ENCODE measurements at regions of chr9 and their contacts with region 1.

Region 1: DNA sequence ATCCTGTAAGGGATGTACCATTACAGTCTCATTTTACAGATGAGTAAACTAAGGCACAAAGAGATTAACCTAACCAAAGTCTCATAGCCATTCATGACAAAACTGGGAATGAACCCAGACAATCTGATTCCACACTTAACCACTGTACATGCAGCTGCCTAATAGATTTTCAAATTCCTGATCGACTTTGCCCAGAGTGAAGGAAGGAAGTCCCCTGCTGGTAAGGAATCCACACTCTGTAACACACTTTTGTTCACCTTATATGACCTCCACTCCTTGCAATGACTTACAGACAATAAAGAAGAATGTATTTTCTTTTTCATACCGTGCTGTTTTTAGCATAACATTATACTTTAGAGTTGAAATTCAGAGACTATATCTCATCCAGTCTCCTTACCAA is 31.3 kb upstream of the PLPP6 start:
- DNase-seq: no peak
- ATAC-seq: no peak
- H3K4me3 ChIP-seq: no peak overlapping the region
- H3K27ac ChIP-seq: no peak overlapping the region
- H3K4me1 ChIP-seq: no peaks in the 10 kb centered on the region
- H3K27me3 ChIP-seq: no peaks in the 10 kb centered on the region
- CTCF ChIP-seq: no peak

Region 2: GRCh38 chr9:4297151-4297785 is 333.6 kb before region 1 on chr9:
- intact Hi-C with region 1: no loop called
- DNase-seq: peak; percentile 82
- ATAC-seq: peak; percentile 59 to 64
- H3K4me3 ChIP-seq: peak overlapping the region; percentile 77
- H3K27ac ChIP-seq: peak overlapping the region; percentile 93
- H3K4me1 ChIP-seq: peaks cover 20% of the 10 kb centered on the region
- H3K27me3 ChIP-seq: peaks cover 15% of the 10 kb centered on the region
- CTCF ChIP-seq: peak; percentile 35

Region 3: GRCh38 chr9:4397917-4398316 is 232.9 kb before region 1 on chr9:
- intact Hi-C with region 1: loop called (anchors 10 kb)
- DNase-seq: no peak
- ATAC-seq: no peak
- H3K4me3 ChIP-seq: no peak overlapping the region
- H3K27ac ChIP-seq: no peak overlapping the region
- H3K4me1 ChIP-seq: no peaks in the 10 kb centered on the region
- H3K27me3 ChIP-seq: no peaks in the 10 kb centered on the region
- CTCF ChIP-seq: no peak